K562 (cell line): ENCODE measurements at regions of chr9 and their contacts with region 1.

Region 1: DNA sequence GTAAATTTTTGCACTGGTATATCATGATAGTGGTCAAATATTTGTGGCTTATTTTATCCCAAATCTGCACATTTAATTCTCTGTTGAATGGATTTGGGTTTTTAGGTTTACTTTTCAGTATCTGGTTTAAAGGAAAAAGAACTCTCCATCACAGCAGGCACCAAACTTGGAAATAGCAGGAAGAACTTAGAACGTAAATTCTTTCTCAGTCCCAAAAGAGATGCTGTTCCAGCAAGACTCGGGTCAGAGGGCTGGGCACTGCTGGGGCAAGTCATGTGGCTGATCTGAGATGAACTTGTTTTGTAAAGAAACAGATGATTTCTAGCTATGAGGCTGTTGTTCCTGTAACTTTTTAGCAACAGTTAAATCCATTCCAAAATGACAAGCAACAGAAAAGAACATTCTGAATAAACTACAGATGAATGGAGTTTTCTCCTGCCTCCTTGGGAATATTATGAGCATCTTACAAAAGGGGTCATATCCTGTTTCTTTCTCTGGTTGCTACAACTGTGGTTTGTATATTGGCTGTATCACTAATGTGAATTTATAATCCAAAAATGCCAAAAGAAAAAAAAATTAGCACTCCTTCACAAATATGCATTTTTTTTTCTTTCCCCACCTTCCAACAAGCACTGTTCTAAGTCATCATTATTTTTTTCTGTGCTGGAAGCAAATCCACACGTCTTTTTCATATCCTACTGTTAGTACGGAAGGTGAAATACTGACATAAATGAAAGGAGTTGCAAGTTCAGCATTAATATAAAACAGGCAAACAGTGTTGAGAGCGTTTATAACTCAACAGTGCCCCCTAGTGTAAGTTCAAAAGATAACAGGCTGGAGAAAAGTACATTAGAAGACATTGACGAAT is 31.1 kb downstream of the OR2K2 start:
- DNase-seq: peak; percentile 26 to 54 (median 38)
- ATAC-seq: peak; percentile 85
- H3K4me3 ChIP-seq: no peak overlapping the region
- H3K27ac ChIP-seq: no peak overlapping the region
- H3K4me1 ChIP-seq: no peaks in the 10 kb centered on the region
- H3K27me3 ChIP-seq: no peaks in the 10 kb centered on the region
- CTCF ChIP-seq: peak; percentile 27 to 81 (median 54); a peak in 5 of 6 replicates
- EP300 ChIP-seq: no peak
- POLR2A ChIP-seq: no peak
- RAD21 ChIP-seq: peak; percentile 72 to 88

Region 2: DNA sequence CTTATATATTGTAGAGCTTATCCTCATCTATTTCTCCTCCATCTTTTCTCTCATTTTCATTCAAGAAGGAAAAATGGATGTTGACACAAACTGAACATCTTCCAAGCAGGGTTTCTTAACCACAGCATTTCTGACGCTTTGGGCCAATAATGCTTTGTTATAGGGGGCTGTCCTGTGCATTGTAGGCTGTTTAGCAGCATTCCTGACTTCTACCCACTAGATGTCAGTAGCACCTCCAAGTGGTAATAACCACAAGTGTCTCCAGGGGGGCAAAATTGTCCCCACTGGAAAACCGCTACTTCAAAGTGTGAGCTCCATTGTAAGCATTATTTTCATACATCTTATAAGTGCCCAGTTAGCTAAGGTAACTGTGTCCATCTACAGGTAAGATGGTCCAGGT is 958.7 kb before region 1 on chr9:
- CTCF ChIA-PET with region 1: no interaction called
- POLR2A ChIA-PET with region 1: no interaction called
- in situ Hi-C with region 1: no loop called
- intact Hi-C with region 1: loop called (anchors 10 kb)
- DNase-seq: peak in 2 of 4 experiments; percentile 28 to 57
- ATAC-seq: peak; percentile 95
- H3K4me3 ChIP-seq: no peak overlapping the region
- H3K27ac ChIP-seq: no peak overlapping the region
- H3K4me1 ChIP-seq: no peaks in the 10 kb centered on the region; a peak in 1 of 5 replicates
- H3K27me3 ChIP-seq: no peaks in the 10 kb centered on the region
- CTCF ChIP-seq: peak; percentile 61 to 79 (median 64)
- EP300 ChIP-seq: no peak
- POLR2A ChIP-seq: no peak
- RAD21 ChIP-seq: peak; percentile 47 to 76

Region 3: GRCh38 chr9:110638381-110638954 is 660.5 kb before region 1 on chr9:
- CTCF ChIA-PET with region 1: no interaction called
- POLR2A ChIA-PET with region 1: no interaction called
- in situ Hi-C with region 1: no loop called
- intact Hi-C with region 1: loop called (anchors 10 kb)
- DNase-seq: no peak
- ATAC-seq: no peak
- H3K4me3 ChIP-seq: no peak overlapping the region
- H3K27ac ChIP-seq: no peak overlapping the region
- H3K4me1 ChIP-seq: no peaks in the 10 kb centered on the region
- H3K27me3 ChIP-seq: no peaks in the 10 kb centered on the region
- CTCF ChIP-seq: peak in 1 of 3 experiments; percentile 9; a peak in 1 of 6 replicates
- EP300 ChIP-seq: no peak
- POLR2A ChIP-seq: no peak
- RAD21 ChIP-seq: peak in 1 of 2 experiments; percentile 30; a peak in 2 of 4 replicates

Region 4: GRCh38 chr9:111068771-111069170 is 230.2 kb before region 1 on chr9:
- CTCF ChIA-PET with region 1: no interaction called
- POLR2A ChIA-PET with region 1: no interaction called
- in situ Hi-C with region 1: no loop called
- intact Hi-C with region 1: no loop called
- DNase-seq: no peak
- ATAC-seq: no peak
- H3K4me3 ChIP-seq: no peak overlapping the region
- H3K27ac ChIP-seq: no peak overlapping the region
- H3K4me1 ChIP-seq: no peaks in the 10 kb centered on the region
- H3K27me3 ChIP-seq: no peaks in the 10 kb centered on the region
- CTCF ChIP-seq: no peak
- EP300 ChIP-seq: no peak
- POLR2A ChIP-seq: no peak
- RAD21 ChIP-seq: no peak

Region 5: DNA sequence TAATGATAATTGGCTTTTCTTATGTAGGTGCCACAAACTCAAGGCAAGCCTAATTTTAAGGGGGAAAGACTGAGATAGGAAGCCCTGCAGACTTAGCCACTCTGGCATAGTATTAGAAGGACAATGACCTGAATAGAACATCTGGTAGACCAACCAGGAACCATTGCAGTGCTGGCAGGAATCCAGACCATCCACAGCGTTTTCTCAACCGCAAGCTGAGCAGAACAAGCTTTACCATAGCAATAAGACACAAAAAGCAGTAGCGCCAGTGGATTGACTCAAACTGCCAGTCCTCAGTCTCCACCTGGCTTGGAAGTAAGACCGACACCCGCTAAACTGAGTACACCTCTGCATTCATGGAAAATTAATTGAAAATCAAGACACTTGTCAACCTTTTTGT is 119.4 kb before region 1 on chr9:
- CTCF ChIA-PET with region 1: no interaction called
- POLR2A ChIA-PET with region 1: no interaction called
- in situ Hi-C with region 1: no loop called
- intact Hi-C with region 1: no loop called
- DNase-seq: no peak
- ATAC-seq: no peak
- H3K4me3 ChIP-seq: no peak overlapping the region
- H3K27ac ChIP-seq: no peak overlapping the region
- H3K4me1 ChIP-seq: no peaks in the 10 kb centered on the region
- H3K27me3 ChIP-seq: no peaks in the 10 kb centered on the region
- CTCF ChIP-seq: no peak
- EP300 ChIP-seq: no peak
- POLR2A ChIP-seq: no peak
- RAD21 ChIP-seq: no peak

Region 6: GRCh38 chr9:111743275-111743674 is 444.3 kb after region 1 on chr9:
- CTCF ChIA-PET with region 1: no interaction called
- POLR2A ChIA-PET with region 1: no interaction called
- in situ Hi-C with region 1: no loop called
- intact Hi-C with region 1: no loop called
- DNase-seq: no peak
- ATAC-seq: no peak
- H3K4me3 ChIP-seq: no peak overlapping the region
- H3K27ac ChIP-seq: no peak overlapping the region
- H3K4me1 ChIP-seq: no peaks in the 10 kb centered on the region
- H3K27me3 ChIP-seq: no peaks in the 10 kb centered on the region
- CTCF ChIP-seq: no peak
- EP300 ChIP-seq: no peak
- POLR2A ChIP-seq: no peak
- RAD21 ChIP-seq: no peak